Activated CD8-positive, alpha-beta T cell treated with anti-CD3 and anti-CD28 coated beads for 36 hours (primary cell): ENCODE measurements at regions of chr2 and their contacts with region 1.

Region 1: DNA sequence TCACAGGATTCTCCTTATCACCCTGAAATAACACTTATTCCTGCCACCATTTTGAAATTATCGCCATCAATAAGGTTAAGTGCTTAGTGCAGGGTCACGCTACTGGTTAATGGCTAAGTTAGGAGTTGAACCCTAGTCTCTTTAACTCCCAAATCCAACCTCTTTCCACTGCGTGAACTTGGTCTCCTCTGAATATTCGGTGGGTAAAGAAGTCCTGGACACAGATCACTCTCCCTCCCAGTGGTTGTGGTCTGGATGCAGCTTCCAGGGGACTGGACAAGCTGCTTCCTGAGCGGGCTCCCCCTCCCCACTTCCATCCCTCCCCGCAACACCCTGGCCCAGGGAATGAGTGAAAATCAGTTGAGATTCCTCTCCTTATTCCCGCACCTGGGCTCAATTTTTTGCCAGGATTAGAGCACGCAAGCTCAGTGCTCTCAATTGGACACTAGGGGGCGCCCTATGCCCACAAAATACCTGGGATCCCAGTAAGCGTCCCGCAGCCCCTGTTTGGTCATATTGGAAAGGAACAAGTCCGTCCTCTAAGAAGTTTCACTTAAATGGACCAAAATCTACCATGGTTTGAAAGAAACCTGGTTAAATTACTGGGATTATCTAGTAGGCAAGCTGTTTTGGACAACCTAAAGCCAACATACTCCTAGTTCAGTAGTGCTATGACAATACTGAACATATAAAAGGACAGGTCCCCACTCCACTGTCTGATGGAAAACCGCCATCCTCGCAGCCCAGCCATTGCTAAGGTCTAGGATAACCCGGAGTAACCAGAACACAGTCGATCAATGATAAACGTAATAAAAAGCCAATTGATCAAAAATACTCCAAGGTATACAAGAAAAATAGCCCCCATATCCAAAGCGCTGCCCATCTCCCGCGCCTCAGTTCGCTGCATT is 40.4 kb downstream of the DHRS9 start:
- DNase-seq: peak; percentile 83
- ATAC-seq: no peak
- H3K4me3 Mint-ChIP-seq: no peak overlapping the region
- H3K27ac Mint-ChIP-seq: no peak overlapping the region
- H3K4me1 Mint-ChIP-seq: peaks cover 48% of the 10 kb centered on the region
- H3K27me3 Mint-ChIP-seq: peaks cover 4% of the 10 kb centered on the region
- CTCF ChIP-seq: peak; percentile 97

Region 2: DNA sequence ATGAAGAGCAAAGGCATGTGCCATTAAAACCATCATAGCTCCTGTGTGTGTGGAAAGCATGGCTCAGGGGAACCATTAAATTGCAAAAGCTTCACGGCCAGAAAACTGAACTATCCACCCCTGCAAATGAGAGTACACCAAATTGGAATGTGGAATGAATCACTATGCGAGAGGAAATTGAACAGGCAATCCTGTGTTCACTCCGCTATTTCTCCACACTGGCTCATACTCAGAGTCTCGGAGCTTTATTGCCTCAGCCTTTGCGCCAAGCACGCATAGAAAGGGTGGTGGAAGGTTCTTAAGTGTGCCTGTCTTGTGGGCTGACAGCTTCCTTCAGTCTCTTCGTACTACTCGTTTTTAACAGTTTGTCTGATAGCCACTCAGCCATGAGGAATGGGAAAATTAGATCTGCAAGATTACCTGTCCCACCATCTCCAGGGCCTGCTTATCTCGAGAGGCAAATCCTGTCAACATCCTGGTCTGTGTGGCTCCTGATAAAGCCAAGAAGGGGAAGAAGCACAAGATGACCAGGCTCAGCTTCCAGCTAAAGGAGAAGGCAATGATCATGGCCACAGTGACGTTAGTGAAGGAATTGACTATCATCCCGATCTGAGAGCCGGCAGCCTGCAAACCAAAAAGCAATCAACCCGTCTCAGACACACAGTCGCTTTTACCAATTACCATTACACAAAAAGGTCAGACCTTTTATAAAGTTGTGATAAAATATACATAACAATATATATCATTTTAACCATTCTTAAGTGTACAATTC is 173.8 kb before region 1 on chr2:
- CTCF ChIA-PET with region 1: no interaction called
- POLR2A ChIA-PET with region 1: no interaction called
- intact Hi-C with region 1: no loop called
- DNase-seq: no peak
- ATAC-seq: no peak
- H3K4me3 Mint-ChIP-seq: no peak overlapping the region
- H3K27ac Mint-ChIP-seq: no peak overlapping the region
- H3K4me1 Mint-ChIP-seq: peaks cover 4% of the 10 kb centered on the region
- H3K27me3 Mint-ChIP-seq: peaks cover 3% of the 10 kb centered on the region
- CTCF ChIP-seq: no peak

Region 3: DNA sequence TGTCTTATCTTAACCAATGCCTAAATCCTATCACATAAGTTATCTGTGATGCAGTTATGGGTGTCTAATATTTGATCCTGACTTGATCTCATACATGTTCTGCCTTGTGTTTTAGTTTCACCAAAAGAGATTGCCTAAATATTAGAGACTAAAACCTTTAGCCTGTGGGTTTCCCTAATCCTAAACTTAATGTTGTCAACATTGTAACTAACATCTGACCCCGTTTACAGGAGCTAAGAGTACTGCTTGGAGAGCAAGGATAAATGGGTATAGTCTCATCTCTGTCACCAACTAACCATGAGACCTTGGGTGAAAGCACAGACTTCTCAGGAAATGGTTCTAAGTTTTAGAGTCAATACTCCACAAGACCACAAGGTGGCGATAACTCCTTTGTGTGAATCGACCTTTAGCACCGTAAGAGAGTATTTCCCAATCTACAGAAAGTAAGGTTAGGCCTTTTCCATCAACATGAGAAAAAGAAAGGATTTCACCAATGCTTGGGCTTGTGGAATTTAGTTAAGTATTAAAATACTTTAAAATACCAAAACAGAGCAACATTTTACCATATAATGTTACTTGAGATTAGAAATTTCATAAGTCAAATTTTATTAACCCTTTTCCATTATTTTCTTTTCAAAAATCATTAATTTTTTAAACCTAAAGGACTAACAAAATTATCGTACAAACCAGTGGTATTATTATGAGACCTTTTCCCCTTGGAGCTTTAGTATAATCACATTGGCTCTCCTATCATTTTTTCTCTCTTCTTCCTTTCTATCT is 148.1 kb before region 1 on chr2:
- CTCF ChIA-PET with region 1: interaction called, 23 read pairs
- POLR2A ChIA-PET with region 1: no interaction called
- intact Hi-C with region 1: loop called (anchors 10 kb)
- DNase-seq: peak; percentile 55
- ATAC-seq: peak; percentile 86
- H3K4me3 Mint-ChIP-seq: no peak overlapping the region
- H3K27ac Mint-ChIP-seq: no peak overlapping the region
- H3K4me1 Mint-ChIP-seq: peaks cover 23% of the 10 kb centered on the region
- H3K27me3 Mint-ChIP-seq: no peaks in the 10 kb centered on the region
- CTCF ChIP-seq: peak; percentile 83

Region 4: DNA sequence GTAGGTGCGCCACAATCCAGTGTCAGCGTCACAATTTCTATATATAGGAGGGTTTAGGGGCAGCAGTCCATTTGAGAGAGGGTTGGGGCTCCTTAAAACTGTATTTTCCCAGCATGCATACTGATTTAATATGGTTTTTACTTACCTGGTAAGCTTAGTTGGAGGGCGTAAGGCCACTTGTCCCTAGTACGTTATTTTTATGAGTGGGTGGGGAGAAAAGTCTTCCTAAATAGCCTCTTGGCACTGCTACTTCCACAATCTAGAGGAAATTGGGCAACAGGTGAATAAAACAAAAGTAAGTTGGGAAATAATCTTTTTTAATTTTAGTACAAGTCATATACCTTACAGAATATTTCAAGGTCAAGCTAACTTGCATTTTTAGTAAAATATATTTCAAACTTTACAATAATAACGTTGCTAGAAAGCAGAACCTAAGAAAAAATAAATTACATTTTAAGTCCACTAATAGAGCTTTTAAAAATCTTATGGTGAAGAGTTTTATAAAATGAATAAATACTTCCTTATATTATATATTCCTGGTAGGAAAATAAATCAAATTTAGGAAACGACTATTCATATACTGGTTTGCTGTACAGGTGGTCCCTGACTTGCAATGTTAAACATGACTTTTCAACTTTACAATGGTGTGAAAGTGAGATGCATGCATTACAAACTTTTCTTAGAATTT is 19.5 kb before region 1 on chr2:
- CTCF ChIA-PET with region 1: interaction called, 60 read pairs
- POLR2A ChIA-PET with region 1: no interaction called
- intact Hi-C with region 1: no loop called
- DNase-seq: no peak
- ATAC-seq: no peak
- H3K4me3 Mint-ChIP-seq: no peak overlapping the region
- H3K27ac Mint-ChIP-seq: no peak overlapping the region
- H3K4me1 Mint-ChIP-seq: peaks cover 1% of the 10 kb centered on the region
- H3K27me3 Mint-ChIP-seq: peaks cover 2% of the 10 kb centered on the region
- CTCF ChIP-seq: no peak

Region 5: GRCh38 chr2:169131587-169132512 is 22.1 kb after region 1 on chr2:
- CTCF ChIA-PET with region 1: interaction called, 136 read pairs
- POLR2A ChIA-PET with region 1: interaction called, 3 read pairs
- intact Hi-C with region 1: loop called (anchors 2 kb)
- DNase-seq: no peak
- ATAC-seq: peak; percentile 96
- H3K4me3 Mint-ChIP-seq: no peak overlapping the region
- H3K27ac Mint-ChIP-seq: no peak overlapping the region
- H3K4me1 Mint-ChIP-seq: peaks cover 2% of the 10 kb centered on the region
- H3K27me3 Mint-ChIP-seq: no peaks in the 10 kb centered on the region
- CTCF ChIP-seq: peak; percentile 88

Region 6: GRCh38 chr2:169159686-169160085 is 49.9 kb after region 1 on chr2:
- CTCF ChIA-PET with region 1: interaction called, 10 read pairs
- POLR2A ChIA-PET with region 1: no interaction called
- intact Hi-C with region 1: no loop called
- DNase-seq: no peak
- ATAC-seq: no peak
- H3K4me3 Mint-ChIP-seq: no peak overlapping the region
- H3K27ac Mint-ChIP-seq: no peak overlapping the region
- H3K4me1 Mint-ChIP-seq: no peaks in the 10 kb centered on the region
- H3K27me3 Mint-ChIP-seq: peaks cover 5% of the 10 kb centered on the region
- CTCF ChIP-seq: no peak

Region 7: DNA sequence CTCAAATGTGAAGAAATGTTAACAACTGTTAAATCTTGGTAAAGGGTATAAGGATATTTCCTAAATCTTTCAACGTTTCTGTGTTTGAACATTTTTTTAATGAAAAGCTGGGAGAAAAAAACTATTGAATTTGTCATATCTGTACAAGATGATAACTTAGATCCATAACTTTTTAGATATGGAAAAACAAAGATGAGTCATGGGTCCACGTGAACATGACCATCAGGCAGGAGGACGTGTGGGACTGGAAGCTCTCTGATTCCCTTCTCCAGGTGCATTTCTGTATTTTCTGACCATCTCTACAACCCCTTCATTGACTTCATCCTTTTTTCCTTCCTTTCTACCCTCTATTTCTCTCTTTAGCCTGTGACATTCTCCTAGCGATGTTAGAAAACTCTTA is 101.2 kb after region 1 on chr2:
- CTCF ChIA-PET with region 1: no interaction called
- POLR2A ChIA-PET with region 1: no interaction called
- intact Hi-C with region 1: no loop called
- DNase-seq: no peak
- ATAC-seq: no peak
- H3K4me3 Mint-ChIP-seq: no peak overlapping the region
- H3K27ac Mint-ChIP-seq: no peak overlapping the region
- H3K4me1 Mint-ChIP-seq: peaks cover 1% of the 10 kb centered on the region
- H3K27me3 Mint-ChIP-seq: peaks cover 9% of the 10 kb centered on the region
- CTCF ChIP-seq: no peak